Endothelial cell of umbilical vein (primary cell): ENCODE measurements at regions of chr11 and their contacts with region 1.

Region 1: DNA sequence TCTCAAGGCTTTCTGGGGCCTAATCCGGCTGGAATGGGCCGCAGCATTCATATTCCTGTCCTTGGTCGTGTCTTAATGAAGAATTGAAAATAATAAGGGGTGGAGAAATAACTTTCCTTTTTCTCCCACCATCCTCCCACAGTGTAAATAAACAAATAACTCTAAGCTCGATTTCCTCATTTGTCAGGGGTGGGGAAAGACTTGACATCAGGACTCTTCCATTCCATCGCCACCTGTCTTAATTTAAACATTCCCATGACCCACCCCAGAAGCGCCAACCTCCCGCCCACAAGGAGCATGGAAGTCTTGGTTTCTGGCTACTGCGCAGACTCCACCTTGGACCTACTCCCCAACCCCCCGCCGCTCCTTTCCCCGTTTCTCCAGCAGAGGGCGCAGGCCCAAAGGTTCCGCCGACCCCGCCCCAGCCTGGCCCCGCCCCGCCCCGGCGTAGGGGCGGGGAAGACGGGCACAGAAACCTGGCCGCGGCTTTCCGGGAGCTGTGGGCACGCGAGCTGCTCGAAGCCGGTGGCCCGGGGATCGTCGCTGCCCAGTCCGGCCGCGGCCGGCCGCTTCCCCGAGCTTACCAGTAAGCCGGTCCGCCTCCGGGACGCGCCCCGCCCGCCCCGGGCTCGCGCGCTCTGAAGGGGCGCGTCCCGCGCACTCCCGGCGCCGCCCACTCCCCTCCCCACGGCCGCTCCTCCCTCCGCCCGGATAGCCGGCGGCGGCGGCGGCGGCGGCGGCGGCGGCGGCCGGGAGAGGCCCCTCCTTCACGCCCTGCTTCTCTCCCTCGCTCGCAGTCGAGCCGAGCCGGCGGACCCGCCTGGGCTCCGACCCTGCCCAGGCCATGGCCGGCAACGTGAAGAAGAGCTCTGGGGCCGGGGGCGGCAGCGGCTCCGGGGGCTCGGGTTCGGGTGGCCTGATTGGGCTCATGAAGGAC is at the start of gene CBL:
- DNase-seq: peak; percentile 90
- H3K4me3 ChIP-seq: peak within 1 kb of the TSS; percentile 88 to 97 (median 93)
- H3K27ac ChIP-seq: peak within 1 kb of the TSS; percentile 55
- H3K4me1 ChIP-seq: peaks cover 17% of the 10 kb centered on the region
- H3K27me3 ChIP-seq: no peaks in the 10 kb centered on the region
- CTCF ChIP-seq: peak; percentile 81 to 95
- POLR2A ChIP-seq: peak; percentile 35
- total RNA-seq, gene CBL: 40.1 and 41.5 TPM in 2 replicates

Region 2: DNA sequence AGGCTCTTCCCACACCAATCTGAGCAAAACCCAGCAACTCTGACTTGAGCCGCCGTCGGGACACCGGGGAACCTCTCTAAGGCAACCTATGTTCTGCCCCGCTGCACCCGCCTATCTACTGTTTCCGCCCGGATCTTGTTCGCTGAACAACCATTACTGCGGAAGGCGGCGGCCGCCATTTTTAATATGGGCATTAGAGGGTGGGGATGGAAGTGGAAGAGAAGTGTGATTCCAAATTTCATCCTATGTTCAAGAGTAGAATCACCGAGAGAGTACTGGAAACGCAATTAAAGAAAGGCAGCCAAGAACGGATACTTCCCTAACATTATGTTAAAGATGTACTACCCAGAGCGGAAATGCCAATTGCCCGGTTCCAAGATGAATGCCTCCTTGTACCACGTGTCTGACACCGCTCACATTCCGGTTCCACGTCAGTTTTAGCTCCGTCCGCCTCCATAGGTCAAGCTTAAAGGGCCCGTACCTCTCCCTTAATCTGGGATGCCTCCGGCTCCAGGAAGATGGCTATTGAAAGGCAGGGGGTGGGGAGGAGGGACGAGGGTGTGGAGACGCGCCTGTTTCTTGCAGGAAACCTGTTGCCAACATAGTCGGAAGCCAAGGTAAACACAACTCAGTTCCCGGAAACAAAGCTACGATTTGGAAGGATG is 104.0 kb before region 1 on chr11 and contains the start of gene DPAGT1:
- CTCF ChIA-PET with region 1: interaction called, 14 read pairs
- POLR2A ChIA-PET with region 1: no interaction called
- dilution Hi-C with region 1: no loop called
- intact Hi-C with region 1: no loop called
- DNase-seq: peak; percentile 96
- H3K4me3 ChIP-seq: peak within 1 kb of the TSS; percentile 81 to 97 (median 86)
- H3K27ac ChIP-seq: peak within 1 kb of the TSS; percentile 94
- H3K4me1 ChIP-seq: peaks cover 21% of the 10 kb centered on the region
- H3K27me3 ChIP-seq: no peaks in the 10 kb centered on the region
- CTCF ChIP-seq: no peak
- POLR2A ChIP-seq: no peak
- total RNA-seq, gene DPAGT1: 48.4 and 62.0 TPM in 2 replicates

Region 3: DNA sequence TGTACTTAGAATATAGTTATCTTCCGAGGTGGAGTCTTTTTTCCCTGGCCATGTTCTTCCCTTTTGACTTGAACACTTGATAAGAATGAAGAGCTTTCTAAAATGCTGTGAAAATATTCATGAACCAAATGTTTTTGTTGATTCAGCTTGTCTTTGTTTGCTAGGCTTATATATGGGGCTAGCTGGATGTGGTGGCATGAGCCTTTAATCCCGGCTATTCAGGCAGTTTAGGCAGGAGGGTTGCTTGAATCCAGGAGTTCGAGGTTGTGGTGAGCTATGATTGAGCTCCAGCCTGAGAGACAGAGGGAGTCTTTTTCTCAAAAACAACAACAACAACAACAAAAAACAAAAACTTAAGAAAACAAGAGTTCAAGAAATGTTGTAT is 23.4 kb after region 1 on chr11:
- CTCF ChIA-PET with region 1: interaction called, 5 read pairs
- POLR2A ChIA-PET with region 1: interaction called, 3 read pairs
- dilution Hi-C with region 1: no loop called
- intact Hi-C with region 1: loop called (anchors 1 kb)
- DNase-seq: peak; percentile 29
- H3K4me3 ChIP-seq: no peak overlapping the region
- H3K27ac ChIP-seq: peak overlapping the region; percentile 57
- H3K4me1 ChIP-seq: peaks cover 17% of the 10 kb centered on the region
- H3K27me3 ChIP-seq: no peaks in the 10 kb centered on the region
- CTCF ChIP-seq: no peak
- POLR2A ChIP-seq: no peak

Region 4: GRCh38 chr11:119284344-119285157 is 78.7 kb after region 1 on chr11:
- CTCF ChIA-PET with region 1: interaction called, 34 read pairs
- POLR2A ChIA-PET with region 1: no interaction called
- dilution Hi-C with region 1: no loop called
- intact Hi-C with region 1: loop called (anchors 1 kb)
- DNase-seq: peak; percentile 39
- H3K4me3 ChIP-seq: no peak overlapping the region
- H3K27ac ChIP-seq: no peak overlapping the region
- H3K4me1 ChIP-seq: no peaks in the 10 kb centered on the region
- H3K27me3 ChIP-seq: no peaks in the 10 kb centered on the region
- CTCF ChIP-seq: peak; percentile 11 to 29
- POLR2A ChIP-seq: no peak

Region 5: DNA sequence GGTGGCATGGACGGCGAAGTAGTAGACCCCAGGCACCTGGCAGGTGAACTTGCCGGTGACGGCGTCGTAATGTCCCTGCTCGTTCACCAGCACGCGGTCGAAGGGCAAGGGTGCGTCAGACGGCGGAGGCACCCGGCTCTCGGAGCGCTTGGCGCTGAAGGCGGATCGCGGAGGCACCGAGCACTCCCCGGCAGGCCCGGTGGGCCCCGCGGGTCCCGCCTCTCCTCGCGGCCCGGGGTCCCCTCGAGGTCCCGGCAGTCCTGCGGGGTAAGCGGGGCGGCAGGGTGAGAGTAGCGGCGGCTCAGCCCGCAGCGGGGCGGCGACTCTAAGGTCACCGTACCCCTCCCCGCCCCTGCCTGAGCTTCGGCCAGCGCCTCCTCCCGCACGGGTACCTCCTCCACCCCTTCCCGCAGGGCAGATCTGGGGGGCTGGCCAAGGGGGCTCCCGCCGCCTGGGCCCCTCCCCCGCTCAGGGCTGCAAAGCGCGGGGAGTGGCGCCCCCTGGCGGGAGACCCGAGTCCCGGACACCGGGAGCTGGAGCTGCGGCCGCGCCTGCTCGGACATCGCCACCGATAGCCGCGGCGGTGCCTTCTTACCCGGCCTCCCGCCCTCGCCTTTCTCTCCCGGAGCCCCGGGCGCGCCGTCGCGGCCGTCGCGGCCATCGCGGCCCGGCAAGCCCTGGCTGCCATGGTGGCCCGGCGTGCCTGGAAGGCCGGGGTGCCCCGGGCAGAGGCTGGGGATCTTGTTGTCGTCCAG is 133.9 kb after region 1 on chr11:
- CTCF ChIA-PET with region 1: interaction called, 31 read pairs
- POLR2A ChIA-PET with region 1: interaction called, 7 read pairs
- dilution Hi-C with region 1: no loop called
- intact Hi-C with region 1: loop called (anchors 1 kb)
- DNase-seq: peak; percentile 71
- H3K4me3 ChIP-seq: peak overlapping the region; percentile 41 to 90 (median 65)
- H3K27ac ChIP-seq: peak overlapping the region; percentile 67
- H3K4me1 ChIP-seq: peaks cover 39% of the 10 kb centered on the region
- H3K27me3 ChIP-seq: no peaks in the 10 kb centered on the region
- CTCF ChIP-seq: peak; percentile 90 to 94
- POLR2A ChIP-seq: no peak

Region 6: DNA sequence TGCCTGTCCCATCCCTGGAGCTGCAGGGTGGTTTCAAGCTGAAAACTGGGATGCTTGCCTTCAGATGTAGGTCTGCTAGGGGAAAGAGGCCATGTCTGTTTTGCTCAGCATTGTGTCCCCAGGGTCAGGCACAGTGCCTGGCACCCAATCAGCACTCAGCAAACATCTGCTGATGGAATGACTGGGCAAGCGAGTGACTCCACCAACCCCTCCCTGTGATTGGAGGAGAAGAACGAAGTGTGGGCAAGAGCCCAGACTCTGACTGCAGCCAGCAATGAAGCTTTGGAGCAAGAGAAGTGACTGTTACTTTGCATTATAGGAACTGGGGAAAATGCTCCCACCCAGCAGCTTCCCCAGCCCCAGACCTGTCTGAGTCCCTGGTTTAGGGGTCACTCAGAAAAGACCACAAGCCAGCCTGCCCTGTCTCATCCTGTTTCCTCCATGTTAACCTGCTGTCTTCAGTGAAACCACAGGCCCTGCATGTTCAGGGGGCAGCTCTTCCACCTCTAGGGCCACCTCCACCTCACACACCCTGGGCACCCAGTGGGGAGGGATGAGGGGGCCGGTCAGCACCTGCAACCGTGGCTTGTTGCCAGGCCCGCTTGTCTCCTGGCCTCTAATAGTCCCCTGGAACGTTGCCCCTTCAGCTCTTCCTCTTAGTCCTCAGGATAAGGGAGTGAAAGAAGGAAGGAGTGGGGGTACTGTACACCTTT is 784.6 kb after region 1 on chr11:
- CTCF ChIA-PET with region 1: no interaction called
- POLR2A ChIA-PET with region 1: no interaction called
- dilution Hi-C with region 1: no loop called
- intact Hi-C with region 1: no loop called
- DNase-seq: no peak
- H3K4me3 ChIP-seq: no peak overlapping the region
- H3K27ac ChIP-seq: no peak overlapping the region
- H3K4me1 ChIP-seq: no peaks in the 10 kb centered on the region
- H3K27me3 ChIP-seq: no peaks in the 10 kb centered on the region
- CTCF ChIP-seq: no peak
- POLR2A ChIP-seq: no peak